Activated CD4-positive, alpha-beta memory T cell treated with anti-CD3 and anti-CD28 coated beads, Interleukin-2, amount 10 ng/mL, durations not matched to agents 7 days and 5 days (primary cell): ENCODE measurements at regions of chr1 and their contacts with region 1.

Region 1: DNA sequence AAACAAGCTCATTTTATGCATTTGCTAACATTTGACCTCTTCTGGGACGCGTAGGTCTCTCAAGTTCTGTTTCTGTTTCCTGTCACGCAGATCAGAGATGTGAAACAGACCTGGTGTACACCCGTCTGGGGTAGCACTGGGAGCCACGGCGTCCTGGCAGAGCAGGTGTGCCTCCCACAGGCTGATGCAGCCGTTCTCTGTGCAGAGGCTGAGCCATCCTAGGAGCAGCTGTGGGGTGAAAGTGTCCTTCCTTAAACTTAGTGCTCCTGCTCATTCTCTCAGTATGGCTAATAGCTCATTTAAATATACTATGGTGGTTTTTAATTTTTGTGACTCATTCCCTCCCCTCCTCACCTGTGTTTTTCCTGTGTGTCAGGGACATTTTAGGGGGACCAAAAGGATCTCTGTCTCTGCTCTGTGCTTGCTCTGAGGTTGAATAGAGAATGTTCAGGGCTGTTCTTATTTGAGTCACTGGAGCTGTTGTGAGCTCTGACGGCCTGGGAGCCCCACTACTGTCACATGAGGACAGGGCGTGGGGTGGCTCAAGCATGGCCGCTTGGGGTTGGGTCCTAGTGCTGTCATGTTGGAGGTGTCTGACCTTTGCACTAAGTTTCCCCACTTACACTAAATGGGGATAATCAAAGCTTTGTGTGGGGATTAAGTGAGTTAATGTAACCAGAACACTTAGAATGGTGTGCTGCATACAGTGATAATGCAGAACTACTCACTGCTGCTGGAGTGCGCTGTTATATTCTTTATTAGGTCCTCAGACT is 43.0 kb downstream of the GALNT2 start:
- DNase-seq: peak; percentile 65
- H3K4me3 Mint-ChIP-seq: no peak overlapping the region
- H3K27ac Mint-ChIP-seq: peak overlapping the region; percentile 36
- H3K4me1 Mint-ChIP-seq: peaks cover 66% of the 10 kb centered on the region
- H3K27me3 Mint-ChIP-seq: no peaks in the 10 kb centered on the region

Region 2: DNA sequence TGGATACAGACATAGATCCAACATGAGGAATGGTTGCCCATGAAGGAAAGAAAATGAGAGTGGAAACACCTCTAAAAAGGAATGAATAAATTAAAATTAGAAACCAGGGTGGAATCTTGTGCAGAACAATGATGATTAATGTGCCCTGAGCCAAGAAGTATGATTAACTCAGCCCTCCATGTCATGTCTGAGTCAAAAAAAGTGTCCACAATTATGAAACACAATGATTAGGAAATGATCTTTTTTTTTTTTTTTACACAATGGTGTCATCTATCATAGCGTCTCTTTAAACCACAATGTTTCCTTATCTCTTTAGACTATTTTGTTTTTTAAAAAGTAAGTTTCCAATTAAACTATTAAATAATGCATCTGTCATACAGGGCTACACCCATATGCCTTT is 918.0 kb before region 1 on chr1:
- CTCF ChIA-PET with region 1: no interaction called
- POLR2A ChIA-PET with region 1: no interaction called
- DNase-seq: no peak
- H3K4me3 Mint-ChIP-seq: no peak overlapping the region
- H3K27ac Mint-ChIP-seq: no peak overlapping the region
- H3K4me1 Mint-ChIP-seq: peaks cover 17% of the 10 kb centered on the region
- H3K27me3 Mint-ChIP-seq: peaks cover 20% of the 10 kb centered on the region

Region 3: GRCh38 chr1:230099465-230099864 is 10.6 kb before region 1 on chr1:
- CTCF ChIA-PET with region 1: no interaction called
- POLR2A ChIA-PET with region 1: no interaction called
- DNase-seq: no peak
- H3K4me3 Mint-ChIP-seq: no peak overlapping the region
- H3K27ac Mint-ChIP-seq: no peak overlapping the region
- H3K4me1 Mint-ChIP-seq: peaks cover 21% of the 10 kb centered on the region
- H3K27me3 Mint-ChIP-seq: no peaks in the 10 kb centered on the region

Region 4: DNA sequence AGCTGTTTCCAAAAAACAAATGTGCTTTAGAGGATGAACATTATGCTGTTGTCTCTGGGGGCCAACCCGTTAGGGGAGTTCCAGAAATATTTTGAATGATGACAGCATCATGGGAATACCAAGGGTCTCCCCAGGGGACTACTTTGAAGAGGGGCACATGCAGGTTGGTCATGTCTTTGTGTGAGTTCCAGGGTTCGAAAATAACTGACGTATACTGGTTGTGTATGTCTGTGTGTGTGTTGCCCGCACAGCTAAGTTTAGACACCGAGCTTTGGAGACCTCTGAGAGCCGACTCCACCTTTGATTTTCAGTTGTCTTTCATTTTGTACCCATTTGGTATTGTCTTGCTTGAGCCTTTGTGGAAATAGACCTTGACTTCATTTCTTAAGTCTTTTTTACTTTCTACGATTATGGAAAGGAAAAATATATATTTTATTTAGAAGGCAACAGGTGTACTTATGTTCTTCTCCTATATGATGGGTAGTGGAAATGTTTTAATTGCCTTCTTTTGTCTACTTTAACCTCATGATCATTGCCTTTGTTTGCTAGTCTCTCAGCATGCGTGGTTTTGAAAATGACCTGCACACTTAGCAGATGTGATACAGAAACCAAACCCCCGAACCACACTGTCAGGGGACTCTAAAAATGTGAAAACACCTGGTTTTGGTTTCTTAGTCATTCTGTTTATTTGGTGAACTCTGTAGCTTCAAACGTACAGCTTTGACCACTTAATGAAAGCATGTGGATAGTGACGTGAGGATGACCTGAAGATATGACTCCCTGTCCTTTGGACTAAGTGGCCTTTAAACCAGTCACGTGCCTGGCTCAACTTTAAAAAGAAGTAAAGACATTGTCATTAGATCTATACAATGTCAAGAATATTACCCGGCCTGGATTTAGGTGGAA is 13.5 kb after region 1 on chr1:
- CTCF ChIA-PET with region 1: interaction called, 9 read pairs
- POLR2A ChIA-PET with region 1: interaction called, 11 read pairs
- DNase-seq: peak; percentile 37
- H3K4me3 Mint-ChIP-seq: no peak overlapping the region
- H3K27ac Mint-ChIP-seq: peak overlapping the region; percentile 17
- H3K4me1 Mint-ChIP-seq: peaks cover 60% of the 10 kb centered on the region
- H3K27me3 Mint-ChIP-seq: no peaks in the 10 kb centered on the region